AG04450 (cell line): ENCODE measurements at regions of chr17 and their contacts with region 1.

Region 1: DNA sequence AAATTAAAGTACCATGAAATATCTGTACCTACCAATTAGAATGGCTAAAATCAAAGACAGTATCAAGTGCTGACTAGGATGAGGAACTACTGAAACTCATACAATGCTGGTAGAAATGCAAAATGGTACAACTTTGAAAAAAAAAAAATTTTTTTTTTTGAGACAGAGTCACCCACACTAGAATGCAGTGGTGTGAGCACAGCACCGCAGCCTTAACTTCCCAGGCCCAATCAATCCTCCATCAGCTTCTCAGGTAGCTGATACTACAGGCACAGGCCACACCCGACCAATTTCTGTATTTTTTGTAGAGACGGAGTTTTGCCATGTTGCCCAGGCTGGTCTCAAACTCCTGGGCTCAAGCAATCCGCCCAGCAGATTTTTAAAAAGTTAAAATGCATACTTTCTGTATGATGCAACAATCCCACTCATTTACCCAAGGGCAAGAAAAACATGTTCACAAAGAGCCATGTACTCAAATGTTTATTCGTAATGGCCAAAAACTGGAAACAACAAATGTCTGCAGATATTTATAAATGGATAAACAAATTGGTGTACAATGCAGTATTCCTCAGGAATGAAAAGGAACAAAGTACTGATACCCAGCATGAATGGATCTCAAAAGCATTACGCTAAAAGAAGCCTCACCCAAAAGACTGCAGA is 8.7 kb downstream of the SMURF2 start:
- DNase-seq: no peak
- H3K4me3 ChIP-seq: peak overlapping the region; percentile 27; the same call in 1 of the 2 replicates
- H3K27ac ChIP-seq: peak overlapping the region; percentile 48
- H3K27me3 ChIP-seq: no peaks in the 10 kb centered on the region
- CTCF ChIP-seq: no peak

Region 2: DNA sequence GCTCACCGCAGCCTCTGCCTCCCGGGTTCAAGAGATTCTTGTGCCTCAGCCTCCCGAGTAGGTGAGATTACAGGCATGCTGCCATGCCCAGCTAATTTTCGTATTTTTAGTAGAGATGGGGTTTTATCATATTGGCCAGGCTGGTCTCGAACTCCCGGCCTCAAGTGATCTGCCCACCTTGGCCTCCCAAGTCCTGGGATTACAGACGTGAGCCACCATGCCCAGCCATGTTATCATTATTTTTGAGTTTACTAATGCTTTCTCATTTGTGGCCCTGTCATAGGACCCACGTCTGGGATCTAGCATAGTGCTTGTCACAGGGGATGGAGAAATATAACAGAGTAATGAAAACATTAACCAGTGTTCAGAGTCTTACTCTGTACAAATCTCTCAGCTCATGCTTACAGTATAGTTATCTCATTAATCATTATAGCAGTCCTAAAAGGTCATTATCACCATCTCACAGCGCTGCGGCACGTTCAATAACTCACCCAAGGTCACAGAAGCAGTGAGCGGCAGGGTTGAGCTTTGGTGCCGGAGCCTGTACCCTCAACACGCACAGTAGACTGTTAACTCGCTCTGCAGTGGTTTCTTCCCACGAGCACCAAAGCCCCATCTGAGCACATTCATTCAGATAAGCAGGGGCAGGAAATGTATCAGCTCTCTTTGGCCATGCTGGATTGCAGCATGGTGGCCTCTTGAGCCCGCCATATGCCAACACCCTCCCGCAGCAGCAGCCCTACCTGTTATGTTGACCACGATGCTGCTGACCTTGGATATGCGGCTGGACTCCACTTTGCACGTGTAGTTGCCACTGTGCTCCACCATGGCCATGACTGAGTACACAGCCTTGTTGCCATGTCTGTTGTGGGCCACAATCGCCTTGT is 284.2 kb before region 1 on chr17:
- CTCF ChIA-PET with region 1: no interaction called
- POLR2A ChIA-PET with region 1: no interaction called
- DNase-seq: no peak
- H3K4me3 ChIP-seq: no peak overlapping the region
- H3K27ac ChIP-seq: no peak overlapping the region
- H3K27me3 ChIP-seq: peaks cover 14% of the 10 kb centered on the region
- CTCF ChIP-seq: no peak

Region 3: GRCh38 chr17:64424324-64425076 is 229.0 kb before region 1 on chr17:
- CTCF ChIA-PET with region 1: no interaction called
- POLR2A ChIA-PET with region 1: no interaction called
- DNase-seq: no peak
- H3K4me3 ChIP-seq: no peak overlapping the region
- H3K27ac ChIP-seq: no peak overlapping the region
- H3K27me3 ChIP-seq: no peaks in the 10 kb centered on the region
- CTCF ChIP-seq: no peak

Region 4: GRCh38 chr17:64638552-64639203 is 14.8 kb before region 1 on chr17:
- CTCF ChIA-PET with region 1: interaction called, 20 read pairs
- POLR2A ChIA-PET with region 1: no interaction called
- DNase-seq: no peak
- H3K4me3 ChIP-seq: no peak overlapping the region
- H3K27ac ChIP-seq: no peak overlapping the region
- H3K27me3 ChIP-seq: no peaks in the 10 kb centered on the region
- CTCF ChIP-seq: no peak

Region 5: DNA sequence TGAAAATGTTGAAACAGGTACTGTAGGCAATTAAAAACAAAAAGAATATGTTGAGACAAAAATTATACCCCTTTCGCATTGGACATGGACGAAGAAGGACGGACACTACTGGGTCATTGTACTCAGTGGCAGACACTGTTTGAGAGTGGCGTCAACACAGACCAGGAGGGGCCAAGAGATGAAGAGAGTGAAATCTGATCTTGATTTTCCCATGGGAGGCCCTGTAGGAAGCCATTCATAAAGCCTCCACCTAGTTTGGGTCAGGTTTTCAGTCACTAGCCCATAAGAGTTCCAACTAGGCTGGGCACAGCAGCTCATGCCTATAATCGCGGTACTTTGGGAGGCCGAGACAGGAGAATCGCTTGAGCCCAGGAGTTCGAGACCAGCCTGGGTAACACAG is 32.2 kb after region 1 on chr17:
- CTCF ChIA-PET with region 1: no interaction called
- POLR2A ChIA-PET with region 1: no interaction called
- DNase-seq: no peak
- H3K4me3 ChIP-seq: no peak overlapping the region
- H3K27ac ChIP-seq: no peak overlapping the region
- H3K27me3 ChIP-seq: no peaks in the 10 kb centered on the region
- CTCF ChIP-seq: no peak